Activated naive CD4-positive, alpha-beta T cell treated with anti-CD3 and anti-CD28 coated beads for 36 hours (primary cell): ENCODE measurements at regions of chr14 and their contacts with region 1.

Region 1: GRCh38 chr14:24114536-24115450 is at the starts of genes DCAF11 and NRL:
- DNase-seq: peak; percentile 99
- H3K4me3 Mint-ChIP-seq: peak within 1 kb of the TSS; percentile 99
- H3K27ac Mint-ChIP-seq: peak within 1 kb of the TSS; percentile 100
- H3K4me1 Mint-ChIP-seq: peaks cover 18% of the 10 kb centered on the region
- H3K27me3 Mint-ChIP-seq: no peaks in the 10 kb centered on the region
- total RNA-seq, gene DCAF11: 79.4 to 84.0 TPM
- total RNA-seq, gene NRL: 1.7 to 1.9 TPM

Region 2: DNA sequence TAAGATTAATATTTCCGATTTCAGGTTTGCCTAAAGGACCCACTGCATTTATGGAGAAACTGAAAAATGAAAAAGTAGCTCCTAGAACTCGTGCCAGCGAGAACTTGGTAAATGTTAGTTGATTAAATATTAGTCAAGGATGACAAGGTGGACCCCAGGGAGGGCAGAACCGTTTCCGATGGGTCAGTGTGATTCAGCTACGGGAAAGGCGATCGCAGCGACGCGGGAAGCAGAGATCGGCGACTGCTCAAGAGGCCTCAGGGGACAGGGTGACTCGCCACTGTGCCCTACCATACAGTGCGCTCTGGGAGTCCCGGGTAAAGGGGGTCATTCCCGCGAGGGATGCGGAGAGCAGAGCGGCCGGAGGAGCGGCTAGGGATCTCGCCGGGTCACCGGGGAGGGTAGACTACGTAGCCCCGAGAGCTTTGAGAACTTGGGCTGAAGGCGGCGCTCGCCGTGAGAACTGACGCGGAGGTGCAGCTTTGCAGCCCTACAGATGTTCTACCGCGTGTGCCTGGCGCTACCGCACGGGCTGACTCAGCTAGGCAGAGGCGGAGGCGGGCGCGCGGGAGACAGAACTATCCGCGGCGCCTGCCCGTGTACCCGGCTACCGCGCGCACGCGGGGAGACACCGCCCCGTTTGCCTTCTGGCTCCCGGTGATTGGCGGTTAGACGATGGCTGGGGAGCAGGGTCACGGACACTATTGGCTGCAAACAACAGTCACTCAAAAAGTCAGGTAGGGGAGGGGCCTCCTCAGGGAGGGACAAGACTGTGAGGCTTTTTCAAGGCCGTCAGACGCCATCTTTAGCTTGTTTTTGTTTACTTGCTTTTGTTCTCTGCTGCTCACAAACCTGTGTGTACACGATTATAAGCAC is 1108.0 kb before region 1 on chr14:
- CTCF ChIA-PET with region 1: no interaction called
- intact Hi-C with region 1: loop called (anchors 10 kb)
- DNase-seq: peak; percentile 99
- H3K4me3 Mint-ChIP-seq: peak overlapping the region; percentile 96
- H3K27ac Mint-ChIP-seq: peak overlapping the region; percentile 98
- H3K4me1 Mint-ChIP-seq: peaks cover 36% of the 10 kb centered on the region
- H3K27me3 Mint-ChIP-seq: no peaks in the 10 kb centered on the region

Region 3: GRCh38 chr14:24036169-24036962 is 78.4 kb before region 1 on chr14:
- CTCF ChIA-PET with region 1: no interaction called
- intact Hi-C with region 1: loop called (anchors 1 kb)
- DNase-seq: peak; percentile 78
- H3K4me3 Mint-ChIP-seq: peak overlapping the region; percentile 91
- H3K27ac Mint-ChIP-seq: peak overlapping the region; percentile 83
- H3K4me1 Mint-ChIP-seq: peaks cover 5% of the 10 kb centered on the region
- H3K27me3 Mint-ChIP-seq: no peaks in the 10 kb centered on the region

Region 4: GRCh38 chr14:24093901-24094761 is 20.7 kb before region 1 on chr14 and contains the start of gene PCK2:
- CTCF ChIA-PET with region 1: interaction called, 226 read pairs
- intact Hi-C with region 1: loop called (anchors 1 kb)
- DNase-seq: peak; percentile 94
- H3K4me3 Mint-ChIP-seq: peak within 1 kb of the TSS; percentile 99
- H3K27ac Mint-ChIP-seq: peak within 1 kb of the TSS; percentile 98
- H3K4me1 Mint-ChIP-seq: peaks cover 32% of the 10 kb centered on the region
- H3K27me3 Mint-ChIP-seq: no peaks in the 10 kb centered on the region
- total RNA-seq, gene PCK2: 117 TPM

Region 5: DNA sequence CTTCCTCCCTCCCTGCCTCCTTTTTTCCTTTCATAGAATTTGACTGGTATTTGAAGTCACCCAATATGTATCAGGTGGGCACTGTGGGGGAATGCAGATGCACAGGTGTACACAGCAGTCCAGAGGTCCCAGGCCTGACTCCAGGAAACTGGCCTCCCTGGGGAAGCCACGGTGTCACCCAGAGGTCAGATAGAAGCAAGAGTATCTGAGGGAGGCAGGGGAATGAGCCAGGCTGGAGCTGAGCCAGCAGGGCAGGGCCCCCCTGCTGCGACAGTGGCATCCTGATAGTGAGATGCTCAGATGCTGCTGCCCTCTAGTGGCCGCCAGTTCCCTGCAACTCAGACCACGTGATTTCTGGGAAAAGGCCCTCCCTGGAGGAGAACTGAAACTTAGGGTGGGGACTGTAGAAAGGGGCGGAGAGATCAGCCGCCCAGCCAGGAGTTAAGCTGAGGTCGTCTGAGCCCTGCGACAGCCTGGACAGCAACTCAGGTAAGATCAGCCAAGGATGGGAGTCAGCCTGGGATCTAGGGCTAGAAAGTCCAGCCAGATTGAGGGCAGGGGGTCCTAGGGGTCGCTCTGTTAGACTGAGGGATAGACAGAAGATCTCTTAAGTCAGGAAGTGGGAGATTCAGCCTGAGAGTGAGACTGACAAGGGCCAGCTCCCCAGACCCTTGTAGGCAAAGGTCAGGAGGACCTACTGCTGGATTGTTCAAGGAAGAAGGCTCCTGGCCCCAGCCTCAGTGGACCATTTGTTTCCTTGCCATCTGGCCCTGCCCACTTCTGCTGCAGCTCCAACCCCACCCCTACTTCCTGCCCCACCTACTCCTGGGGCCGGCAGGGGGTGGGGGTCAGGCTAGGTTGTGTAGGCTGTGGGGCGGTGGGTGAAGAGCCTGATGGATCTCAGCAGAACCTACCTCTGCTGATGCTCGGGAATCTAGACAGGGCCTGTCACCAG is 46.3 kb after region 1 on chr14 and contains the start of gene IRF9:
- CTCF ChIA-PET with region 1: interaction called, 31 read pairs
- intact Hi-C with region 1: loop called (anchors 1 kb)
- DNase-seq: peak; percentile 99
- H3K4me3 Mint-ChIP-seq: peak within 1 kb of the TSS; percentile 99
- H3K27ac Mint-ChIP-seq: peak within 1 kb of the TSS; percentile 100
- H3K4me1 Mint-ChIP-seq: peaks cover 43% of the 10 kb centered on the region
- H3K27me3 Mint-ChIP-seq: no peaks in the 10 kb centered on the region
- total RNA-seq, gene IRF9: 202 to 212 TPM

Region 6: GRCh38 chr14:24232121-24232644 is 117.4 kb after region 1 on chr14 and contains the start of gene NEDD8:
- CTCF ChIA-PET with region 1: no interaction called
- intact Hi-C with region 1: loop called (anchors 1 kb)
- DNase-seq: peak; percentile 96
- H3K4me3 Mint-ChIP-seq: peak within 1 kb of the TSS; percentile 98
- H3K27ac Mint-ChIP-seq: peak within 1 kb of the TSS; percentile 97
- H3K4me1 Mint-ChIP-seq: peaks cover 52% of the 10 kb centered on the region
- H3K27me3 Mint-ChIP-seq: no peaks in the 10 kb centered on the region
- total RNA-seq, gene NEDD8: 172 to 196 TPM

Region 7: GRCh38 chr14:24299255-24300195 is 184.7 kb after region 1 on chr14 and contains the starts of genes DHRS1 and NOP9:
- CTCF ChIA-PET with region 1: interaction called, 3 read pairs
- intact Hi-C with region 1: loop called (anchors 1 kb)
- DNase-seq: peak; percentile 94
- H3K4me3 Mint-ChIP-seq: peak within 1 kb of the TSS; percentile 87
- H3K27ac Mint-ChIP-seq: peak within 1 kb of the TSS; percentile 89
- H3K4me1 Mint-ChIP-seq: peaks cover 47% of the 10 kb centered on the region
- H3K27me3 Mint-ChIP-seq: no peaks in the 10 kb centered on the region
- total RNA-seq, gene DHRS1: 11.8 to 13.8 TPM
- total RNA-seq, gene NOP9: 24.8 to 26.4 TPM